Activated CD8-positive, alpha-beta T cell treated with anti-CD3 and anti-CD28 coated beads, Interleukin-2, amount 10 ng/mL, durations not matched to agents 7 days and 5 days (primary cell): ENCODE measurements at regions of chr7 and their contacts with region 1.

Region 1: DNA sequence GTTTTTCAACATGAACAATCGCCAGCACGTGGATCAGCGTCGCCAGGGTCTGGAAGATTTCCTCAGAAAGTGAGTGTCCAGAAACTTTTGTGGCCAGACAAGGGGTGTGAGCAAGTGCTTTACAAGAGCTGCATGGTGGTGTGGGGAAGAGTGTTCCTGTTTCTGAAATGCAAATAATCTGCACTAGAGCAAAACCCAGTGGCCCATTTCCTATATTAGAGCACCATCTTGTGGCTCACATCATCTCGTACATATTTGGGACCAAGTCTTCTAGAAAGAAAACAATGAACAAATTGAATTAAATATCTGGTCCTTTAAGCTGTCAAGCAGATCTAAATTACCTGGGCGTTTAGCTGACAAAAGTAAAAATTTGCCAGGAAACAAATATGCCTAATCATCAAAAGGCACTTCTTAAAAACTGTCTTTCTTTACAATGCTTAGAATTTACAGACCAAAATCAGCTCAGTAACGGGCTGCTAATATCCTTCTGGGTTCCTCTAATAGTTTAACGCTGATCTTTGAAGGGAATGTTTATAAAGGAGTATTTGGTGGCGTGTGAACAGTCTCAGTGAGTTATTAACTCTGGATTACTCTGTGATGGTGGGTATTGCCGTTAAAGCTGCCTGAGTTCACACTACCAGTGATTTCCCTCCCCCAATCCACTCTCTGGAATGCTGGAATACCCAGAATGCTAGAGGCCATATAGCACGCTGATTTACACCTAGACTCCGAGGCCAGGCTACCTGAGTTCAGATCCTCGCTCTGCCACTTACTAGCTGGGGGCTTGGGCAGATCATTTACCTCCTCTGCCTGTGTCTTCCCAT is 73.6 kb downstream of the SNX10 start:
- DNase-seq: peak; percentile 71
- ATAC-seq: peak; percentile 77
- H3K4me3 Mint-ChIP-seq: no peak overlapping the region
- H3K27ac Mint-ChIP-seq: peak overlapping the region; percentile 48
- H3K4me1 Mint-ChIP-seq: peaks cover 16% of the 10 kb centered on the region
- H3K27me3 Mint-ChIP-seq: no peaks in the 10 kb centered on the region

Region 2: DNA sequence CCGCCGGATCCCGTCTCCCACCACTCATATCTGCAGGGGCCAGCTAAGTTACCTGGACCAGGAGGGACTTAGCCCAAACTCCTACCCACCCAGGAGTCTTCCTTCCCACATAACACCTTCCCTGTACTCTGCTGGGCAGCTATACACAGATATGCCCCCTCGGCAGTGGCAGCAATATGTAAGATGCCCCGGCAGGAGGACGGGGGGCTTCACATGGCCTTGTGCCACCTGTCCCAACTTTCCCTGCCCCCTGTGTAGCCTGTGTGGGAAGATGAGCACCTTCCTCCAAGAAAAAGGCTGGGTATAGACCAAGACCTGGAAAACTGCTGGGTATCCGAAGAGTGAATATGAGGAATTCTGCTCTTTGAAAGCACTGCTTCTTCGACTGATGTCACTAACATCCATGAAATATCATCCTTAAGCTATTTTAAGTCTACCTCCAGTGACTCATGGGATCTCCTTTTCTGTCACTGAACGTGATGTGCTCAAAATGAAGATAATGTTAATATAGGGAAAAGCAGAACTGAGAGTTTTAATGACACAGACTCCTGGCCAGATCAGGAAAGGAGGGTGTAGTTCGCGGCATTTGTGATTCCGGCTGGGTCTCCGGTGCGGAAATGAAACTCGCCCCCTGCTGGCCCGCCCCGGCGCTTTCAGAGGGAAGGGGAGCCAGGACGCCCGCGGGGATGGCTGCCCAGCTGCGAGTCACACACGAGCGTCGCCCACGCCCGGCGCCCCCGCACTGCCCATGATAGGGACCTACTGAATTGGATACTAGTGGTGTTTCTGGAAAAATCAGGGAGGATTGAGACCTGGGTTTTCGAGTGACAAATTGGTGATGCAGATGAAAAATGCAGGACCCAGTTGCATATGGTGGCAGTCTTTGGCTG is 470.1 kb before region 1 on chr7:
- CTCF ChIA-PET with region 1: interaction called, 45 read pairs
- POLR2A ChIA-PET with region 1: no interaction called
- DNase-seq: peak; percentile 65
- ATAC-seq: peak; percentile 77
- H3K4me3 Mint-ChIP-seq: peak overlapping the region; percentile 24
- H3K27ac Mint-ChIP-seq: no peak overlapping the region
- H3K4me1 Mint-ChIP-seq: peaks cover 35% of the 10 kb centered on the region
- H3K27me3 Mint-ChIP-seq: peaks cover 26% of the 10 kb centered on the region

Region 3: GRCh38 chr7:26193432-26194207 is 171.7 kb before region 1 on chr7:
- CTCF ChIA-PET with region 1: interaction called, 25 read pairs
- POLR2A ChIA-PET with region 1: interaction called, 9 read pairs
- DNase-seq: no peak
- ATAC-seq: peak; percentile 6
- H3K4me3 Mint-ChIP-seq: peak overlapping the region; percentile 100
- H3K27ac Mint-ChIP-seq: peak overlapping the region; percentile 86
- H3K4me1 Mint-ChIP-seq: peaks cover 78% of the 10 kb centered on the region
- H3K27me3 Mint-ChIP-seq: no peaks in the 10 kb centered on the region

Region 4: GRCh38 chr7:26284995-26285632 is 80.2 kb before region 1 on chr7:
- CTCF ChIA-PET with region 1: interaction called, 17 read pairs
- POLR2A ChIA-PET with region 1: no interaction called
- DNase-seq: no peak
- ATAC-seq: peak; percentile 73
- H3K4me3 Mint-ChIP-seq: no peak overlapping the region
- H3K27ac Mint-ChIP-seq: no peak overlapping the region
- H3K4me1 Mint-ChIP-seq: peaks cover 4% of the 10 kb centered on the region
- H3K27me3 Mint-ChIP-seq: peaks cover 8% of the 10 kb centered on the region

Region 5: GRCh38 chr7:26376175-26376917 is 11.1 kb after region 1 on chr7:
- CTCF ChIA-PET with region 1: interaction called, 23 read pairs
- POLR2A ChIA-PET with region 1: no interaction called
- DNase-seq: peak; percentile 48
- ATAC-seq: peak; percentile 62
- H3K4me3 Mint-ChIP-seq: peak overlapping the region; percentile 73
- H3K27ac Mint-ChIP-seq: no peak overlapping the region
- H3K4me1 Mint-ChIP-seq: peaks cover 10% of the 10 kb centered on the region
- H3K27me3 Mint-ChIP-seq: peaks cover 21% of the 10 kb centered on the region

Region 6: DNA sequence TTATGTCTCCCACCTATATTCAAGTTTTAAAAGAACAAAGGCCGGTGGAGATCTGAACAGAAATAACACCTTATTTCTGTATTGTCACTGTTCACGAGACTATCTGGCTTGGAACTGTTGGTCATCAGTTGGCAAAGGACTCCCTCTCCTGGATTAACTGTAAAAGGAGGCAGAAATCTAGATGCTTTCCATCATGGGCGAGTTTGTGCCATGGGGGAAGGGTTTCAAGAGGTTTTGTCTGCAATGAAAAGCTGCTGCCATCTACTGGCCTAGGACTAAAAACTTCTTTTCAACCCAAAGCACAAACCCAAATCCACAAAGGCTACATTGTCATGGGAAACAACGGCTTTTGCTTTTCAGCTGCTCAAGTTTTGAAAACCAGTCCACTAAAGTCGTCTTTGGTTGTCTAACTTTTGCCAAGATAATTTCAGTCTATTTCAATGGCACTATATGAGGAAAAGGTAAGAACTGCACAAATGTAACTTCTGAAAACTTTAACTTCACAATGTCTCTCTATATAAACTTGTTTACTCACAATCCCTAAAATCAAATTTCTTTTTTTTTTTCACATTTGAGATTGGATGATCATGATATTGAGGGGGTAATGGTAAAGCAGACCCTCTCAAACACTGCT is 302.3 kb after region 1 on chr7:
- CTCF ChIA-PET with region 1: interaction called, 54 read pairs
- POLR2A ChIA-PET with region 1: no interaction called
- DNase-seq: peak; percentile 76
- ATAC-seq: peak; percentile 71
- H3K4me3 Mint-ChIP-seq: no peak overlapping the region
- H3K27ac Mint-ChIP-seq: no peak overlapping the region
- H3K4me1 Mint-ChIP-seq: peaks cover 12% of the 10 kb centered on the region
- H3K27me3 Mint-ChIP-seq: peaks cover 22% of the 10 kb centered on the region